Calu3 (cell line): ENCODE measurements at regions of chr1 and their contacts with region 1.

Region 1: DNA sequence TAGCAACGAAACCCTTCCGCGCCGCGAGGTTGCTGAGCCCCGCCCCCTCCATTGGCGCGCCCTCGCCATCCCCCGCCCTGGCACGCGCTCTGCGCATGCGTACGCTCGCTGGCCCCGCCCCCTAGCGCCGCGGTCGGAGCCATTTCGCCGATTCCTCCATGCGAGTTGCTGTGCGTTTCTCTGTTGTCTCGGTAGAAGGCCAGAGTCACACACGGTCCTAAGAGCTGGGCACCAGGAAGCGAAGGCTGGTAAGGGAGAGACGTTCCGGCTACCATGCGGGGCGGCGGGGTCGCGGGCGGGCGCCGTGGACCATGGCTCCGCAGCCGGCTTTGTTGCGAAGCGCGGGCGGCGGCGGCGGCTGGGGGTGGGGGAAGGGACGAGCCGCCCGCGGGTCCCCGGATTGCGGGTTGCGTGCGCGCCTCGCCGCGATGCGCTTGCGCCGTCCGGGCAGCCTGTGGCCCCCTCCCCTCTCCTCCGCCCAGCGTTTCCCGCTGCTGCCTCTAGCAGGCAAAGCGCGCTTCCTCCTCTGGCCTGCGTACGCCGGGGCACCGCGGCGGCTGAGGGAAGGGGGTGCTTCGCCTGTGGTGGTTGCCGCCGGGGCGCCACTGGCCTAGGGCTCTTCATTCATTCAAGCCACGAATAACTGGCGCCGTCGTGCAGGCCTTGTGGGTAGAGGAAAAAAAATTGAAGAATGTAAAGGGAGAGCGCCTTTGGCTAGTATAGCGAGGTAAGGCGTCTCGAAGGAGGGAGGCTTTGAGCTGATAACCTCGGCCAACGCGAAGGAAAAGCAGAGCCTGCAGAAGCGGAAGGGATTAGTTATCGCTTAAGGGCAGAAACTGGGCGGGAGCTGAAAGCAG is at the start of gene DHX9:
- DNase-seq: peak; percentile 98
- H3K4me3 Mint-ChIP-seq: peak within 1 kb of the TSS; percentile 90
- H3K27ac Mint-ChIP-seq: peak within 1 kb of the TSS; percentile 94
- H3K4me1 Mint-ChIP-seq: peaks cover 11% of the 10 kb centered on the region
- H3K27me3 Mint-ChIP-seq: no peaks in the 10 kb centered on the region
- CTCF ChIP-seq: peak; percentile 19
- total RNA-seq, gene DHX9: 224 and 263 TPM in 2 replicates

Region 2: DNA sequence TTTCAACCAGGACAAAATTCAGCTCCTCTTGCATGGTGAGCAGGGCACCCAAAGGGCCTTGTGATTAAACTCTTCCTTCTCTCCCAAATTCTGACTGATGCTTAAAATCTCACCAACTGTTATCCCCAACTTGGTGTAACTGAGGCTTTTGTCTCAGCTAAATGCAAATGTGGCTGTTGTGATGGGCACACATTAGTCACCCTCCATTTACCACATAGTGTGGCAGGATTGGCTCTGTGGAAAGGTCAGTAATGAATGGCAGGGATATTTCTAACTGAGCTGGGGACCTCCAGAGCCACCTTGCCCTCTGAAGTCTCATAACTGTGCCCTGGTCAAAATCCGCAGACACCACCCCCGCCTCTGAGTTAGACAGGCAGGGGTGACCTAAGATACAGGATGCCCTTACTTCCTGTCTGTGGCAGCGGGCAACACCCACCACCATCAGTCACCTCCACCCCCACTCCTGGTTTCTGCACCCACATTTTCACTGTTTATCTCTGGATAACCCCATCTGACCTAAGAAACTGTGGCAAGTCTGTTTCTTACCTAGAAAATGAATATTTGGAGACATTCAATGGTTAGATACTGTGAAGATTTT is 209.8 kb before region 1 on chr1:
- CTCF ChIA-PET with region 1: no interaction called
- intact Hi-C with region 1: no loop called
- DNase-seq: no peak
- H3K4me3 Mint-ChIP-seq: no peak overlapping the region
- H3K27ac Mint-ChIP-seq: no peak overlapping the region
- H3K4me1 Mint-ChIP-seq: peaks cover 49% of the 10 kb centered on the region
- H3K27me3 Mint-ChIP-seq: no peaks in the 10 kb centered on the region
- CTCF ChIP-seq: no peak

Region 3: GRCh38 chr1:182855911-182856310 is 16.5 kb after region 1 on chr1:
- CTCF ChIA-PET with region 1: no interaction called
- intact Hi-C with region 1: loop called (anchors 2 kb)
- DNase-seq: no peak
- H3K4me3 Mint-ChIP-seq: no peak overlapping the region
- H3K27ac Mint-ChIP-seq: no peak overlapping the region
- H3K4me1 Mint-ChIP-seq: no peaks in the 10 kb centered on the region
- H3K27me3 Mint-ChIP-seq: no peaks in the 10 kb centered on the region
- CTCF ChIP-seq: no peak

Region 4: GRCh38 chr1:182939413-182939812 is 100.0 kb after region 1 on chr1:
- CTCF ChIA-PET with region 1: no interaction called
- intact Hi-C with region 1: no loop called
- DNase-seq: no peak
- H3K4me3 Mint-ChIP-seq: no peak overlapping the region
- H3K27ac Mint-ChIP-seq: no peak overlapping the region
- H3K4me1 Mint-ChIP-seq: no peaks in the 10 kb centered on the region
- H3K27me3 Mint-ChIP-seq: no peaks in the 10 kb centered on the region
- CTCF ChIP-seq: no peak

Region 5: GRCh38 chr1:182962554-182963115 is 123.2 kb after region 1 on chr1:
- CTCF ChIA-PET with region 1: no interaction called
- intact Hi-C with region 1: no loop called
- DNase-seq: peak; percentile 80
- H3K4me3 Mint-ChIP-seq: peak overlapping the region; percentile 63
- H3K27ac Mint-ChIP-seq: peak overlapping the region; percentile 86
- H3K4me1 Mint-ChIP-seq: peaks cover 37% of the 10 kb centered on the region
- H3K27me3 Mint-ChIP-seq: no peaks in the 10 kb centered on the region
- CTCF ChIP-seq: peak; percentile 89

Region 6: GRCh38 chr1:182977480-182977879 is 138.0 kb after region 1 on chr1:
- CTCF ChIA-PET with region 1: no interaction called
- intact Hi-C with region 1: no loop called
- DNase-seq: no peak
- H3K4me3 Mint-ChIP-seq: no peak overlapping the region
- H3K27ac Mint-ChIP-seq: no peak overlapping the region
- H3K4me1 Mint-ChIP-seq: peaks cover 46% of the 10 kb centered on the region
- H3K27me3 Mint-ChIP-seq: no peaks in the 10 kb centered on the region
- CTCF ChIP-seq: no peak

Region 7: DNA sequence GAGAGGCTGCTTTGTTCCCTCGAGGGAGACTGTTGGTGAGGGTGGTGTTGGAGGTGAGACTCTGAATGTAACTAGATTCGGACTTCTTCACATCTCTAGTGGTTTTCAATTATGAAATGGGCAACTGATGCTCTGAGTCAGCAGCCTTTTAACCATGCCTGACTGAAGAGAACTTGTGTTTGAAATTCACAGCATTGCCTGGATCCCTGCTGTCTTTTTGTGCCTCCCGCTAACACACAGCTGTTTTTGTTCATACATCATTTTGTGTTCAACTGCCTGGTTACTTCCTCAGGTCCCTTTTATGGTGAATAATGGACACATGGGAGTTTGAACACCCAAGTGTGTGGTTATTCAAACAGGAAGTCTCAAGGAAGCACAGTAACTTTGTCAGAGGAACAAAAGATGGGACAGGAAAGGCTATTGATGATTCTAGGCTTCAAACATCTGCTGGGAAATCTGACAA is 200.6 kb after region 1 on chr1:
- CTCF ChIA-PET with region 1: no interaction called
- intact Hi-C with region 1: loop called (anchors 10 kb)
- DNase-seq: no peak
- H3K4me3 Mint-ChIP-seq: no peak overlapping the region
- H3K27ac Mint-ChIP-seq: peak overlapping the region; percentile 54
- H3K4me1 Mint-ChIP-seq: peaks cover 89% of the 10 kb centered on the region
- H3K27me3 Mint-ChIP-seq: no peaks in the 10 kb centered on the region
- CTCF ChIP-seq: no peak